H1 (cell line): ENCODE measurements at regions of chr9 and their contacts with region 1.

Region 1: GRCh38 chr9:74755355-74755754 is 132.4 kb downstream of the TRPM6 start:
- DNase-seq: no peak
- H3K4me3 ChIP-seq: no peak overlapping the region
- H3K27ac ChIP-seq: no peak overlapping the region
- H3K4me1 ChIP-seq: no peaks in the 10 kb centered on the region
- H3K27me3 ChIP-seq: no peaks in the 10 kb centered on the region
- CTCF ChIP-seq: no peak
- EP300 ChIP-seq: no peak
- POLR2A ChIP-seq: no peak
- RAD21 ChIP-seq: no peak

Region 2: DNA sequence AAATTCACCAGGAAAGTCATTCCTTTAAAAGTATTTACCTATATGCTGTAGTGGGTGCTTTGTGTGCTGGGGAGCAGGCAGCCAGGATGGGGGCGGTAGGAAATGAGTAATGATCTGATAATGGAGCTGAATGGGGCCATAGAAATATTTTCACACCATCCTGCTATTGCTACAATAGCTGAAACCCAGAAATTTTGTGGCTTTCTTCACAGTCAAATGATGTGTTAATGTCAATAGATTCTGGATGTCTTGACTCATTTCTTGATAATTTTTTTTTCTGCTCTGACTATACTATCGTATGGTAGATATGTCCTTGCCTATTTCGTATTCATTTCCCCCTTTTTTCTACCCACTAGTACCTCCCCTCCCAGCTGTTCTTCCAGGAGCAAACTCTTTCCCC is 198.7 kb before region 1 on chr9:
- CTCF ChIA-PET with region 1: no interaction called
- POLR2A ChIA-PET with region 1: no interaction called
- DNase-seq: no peak
- H3K4me3 ChIP-seq: no peak overlapping the region
- H3K27ac ChIP-seq: no peak overlapping the region
- H3K4me1 ChIP-seq: peaks cover 0 to 3% (median 0%) of the 10 kb centered on the region in 4 experiments; a peak in 1 of 7 replicates
- H3K27me3 ChIP-seq: no peaks in the 10 kb centered on the region
- CTCF ChIP-seq: no peak
- EP300 ChIP-seq: no peak
- POLR2A ChIP-seq: no peak
- RAD21 ChIP-seq: no peak

Region 3: DNA sequence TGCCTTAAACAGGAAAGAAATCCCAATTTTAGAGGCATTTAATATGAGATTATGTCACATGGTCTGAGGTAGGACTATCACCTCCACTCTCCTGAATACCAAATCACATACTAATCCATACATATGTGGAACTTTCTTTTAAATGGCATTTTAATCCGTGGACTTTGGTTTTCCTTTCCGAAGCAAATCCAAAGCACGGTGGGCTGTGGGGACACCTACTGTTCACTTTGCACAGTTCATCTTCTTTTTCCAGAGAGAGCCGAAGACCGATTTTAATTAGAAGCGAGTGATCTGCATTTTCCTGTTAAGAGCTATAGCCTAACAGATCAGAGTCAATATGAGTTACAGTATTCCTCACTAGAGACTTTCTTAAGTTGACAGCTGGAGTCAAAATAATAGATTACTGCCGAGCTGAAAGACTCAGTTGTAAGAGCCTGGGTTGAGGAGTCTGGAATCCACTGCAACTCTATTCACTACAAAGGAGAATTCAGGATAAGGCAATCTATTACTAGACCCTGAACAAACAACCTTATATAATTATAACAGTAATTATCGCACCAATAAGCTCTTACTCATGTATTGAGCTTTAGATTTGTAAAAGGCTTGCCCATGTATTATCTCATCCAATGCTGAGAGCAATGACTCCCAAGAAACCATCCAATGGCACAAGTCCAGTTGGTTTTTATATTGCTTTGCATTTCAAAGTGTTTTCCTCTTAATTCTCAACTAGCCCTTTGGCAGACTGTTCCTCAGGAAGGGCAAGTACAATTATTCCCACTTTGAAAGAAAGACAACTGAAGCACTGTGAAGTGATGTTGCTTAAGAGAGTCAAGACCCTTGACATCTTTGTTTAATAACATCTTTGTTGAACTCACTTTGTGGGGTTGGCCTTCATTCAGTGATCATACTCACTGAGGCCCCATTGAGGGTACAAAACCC is 12.3 kb before region 1 on chr9:
- CTCF ChIA-PET with region 1: interaction called, 10 read pairs
- POLR2A ChIA-PET with region 1: no interaction called
- DNase-seq: no peak
- H3K4me3 ChIP-seq: no peak overlapping the region
- H3K27ac ChIP-seq: no peak overlapping the region
- H3K4me1 ChIP-seq: no peaks in the 10 kb centered on the region
- H3K27me3 ChIP-seq: no peaks in the 10 kb centered on the region
- CTCF ChIP-seq: peak; percentile 37 to 72 (median 53); a peak in 3 of 4 replicates
- EP300 ChIP-seq: no peak
- POLR2A ChIP-seq: no peak
- RAD21 ChIP-seq: peak; percentile 80 to 85

Region 4: GRCh38 chr9:74865177-74865576 is 109.8 kb after region 1 on chr9:
- CTCF ChIA-PET with region 1: no interaction called
- POLR2A ChIA-PET with region 1: no interaction called
- DNase-seq: no peak
- H3K4me3 ChIP-seq: no peak overlapping the region
- H3K27ac ChIP-seq: no peak overlapping the region
- H3K4me1 ChIP-seq: no peaks in the 10 kb centered on the region
- H3K27me3 ChIP-seq: no peaks in the 10 kb centered on the region
- CTCF ChIP-seq: no peak
- EP300 ChIP-seq: no peak
- POLR2A ChIP-seq: no peak
- RAD21 ChIP-seq: no peak